ENCODE measurements at regions of chr10 and their contacts with region 1.

Region 1: DNA sequence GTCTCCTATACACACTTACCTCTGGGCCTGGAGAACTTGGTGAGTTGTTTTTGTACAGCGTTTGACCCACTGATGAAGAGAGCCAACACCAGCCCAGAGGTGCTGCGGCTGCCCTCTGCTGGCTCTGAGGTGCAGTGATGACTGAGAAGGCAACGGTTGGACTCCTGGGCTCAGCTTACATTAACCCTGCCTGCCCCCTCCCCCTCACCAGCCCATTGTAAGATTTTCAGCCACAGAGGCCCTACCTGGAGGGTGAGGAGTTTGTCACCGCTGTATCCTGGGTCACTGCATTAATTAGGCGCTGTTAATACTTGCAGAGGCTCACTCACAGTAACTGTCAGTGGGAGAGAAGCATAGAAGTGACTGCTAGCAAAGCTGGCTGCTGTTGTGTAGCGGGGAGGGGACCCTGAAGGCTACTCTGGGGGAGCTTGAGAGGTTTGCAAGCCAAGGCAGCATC is 19.0 kb upstream of the ANKRD2 start:
- DNase-seq: peak in 2 of 4 donors; percentile 69 to 88
- ATAC-seq: peak; percentile 95
- H3K4me3 ChIP-seq: no peak overlapping the region
- H3K27ac ChIP-seq: no peak overlapping the region
- H3K4me1 ChIP-seq: peaks cover 0 to 6% of the 10 kb centered on the region in 2 donors
- H3K27me3 ChIP-seq: no peaks in the 10 kb centered on the region
- CTCF ChIP-seq: peak; percentile 69 to 71

Region 2: DNA sequence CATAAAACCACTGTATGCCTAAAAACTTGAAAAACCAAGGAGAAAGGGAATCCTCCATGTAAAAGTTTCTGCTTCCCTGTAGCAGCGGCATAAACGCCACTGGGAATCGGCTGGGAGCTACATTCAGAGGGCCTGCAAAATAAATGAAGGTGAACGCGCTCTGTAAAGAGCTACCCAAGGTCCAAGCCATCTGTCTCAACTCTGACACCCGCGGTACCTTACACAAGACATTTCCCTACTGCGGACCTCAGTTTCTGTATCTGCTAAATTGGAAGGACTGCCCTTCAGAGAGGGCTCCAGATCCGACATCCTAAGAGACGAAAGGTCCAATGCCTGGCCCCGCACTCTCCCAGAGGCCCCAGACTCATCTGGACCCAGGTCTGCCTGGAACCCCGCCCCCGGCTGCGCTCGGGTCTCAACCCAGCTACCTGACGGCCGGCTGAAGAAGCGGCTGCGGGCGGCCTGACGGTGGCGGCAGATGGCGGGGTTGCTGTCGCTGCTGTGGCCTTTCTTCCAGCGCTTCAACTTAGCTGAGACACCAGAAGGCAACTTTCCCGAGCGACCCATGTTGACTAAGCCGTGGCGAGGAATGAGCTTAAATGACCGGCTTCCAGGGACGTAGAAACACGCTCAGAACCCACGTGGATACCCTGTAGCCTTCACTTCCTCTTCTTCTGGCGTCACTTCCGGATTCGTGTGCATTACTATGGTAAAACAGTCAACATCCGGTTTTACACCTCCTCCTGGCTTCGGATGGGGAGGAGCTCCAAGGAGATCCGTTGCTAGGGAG is 152.7 kb before region 1 on chr10 and contains the start of gene RRP12:
- intact Hi-C with region 1: no loop called
- DNase-seq: peak; percentile 85 to 98 (median 93)
- ATAC-seq: peak; percentile 96
- H3K4me3 ChIP-seq: peak within 1 kb of the TSS; percentile 72 to 86
- H3K27ac ChIP-seq: peak within 1 kb of the TSS; percentile 78 to 91
- H3K4me1 ChIP-seq: peaks cover 3 to 39% of the 10 kb centered on the region in 2 donors
- H3K27me3 ChIP-seq: no peaks in the 10 kb centered on the region
- CTCF ChIP-seq: no peak
- polyA plus RNA-seq, gene RRP12: 22.6 to 36.2 (median 24.8) TPM

Region 3: GRCh38 chr10:97463363-97464132 is 90.1 kb before region 1 on chr10:
- intact Hi-C with region 1: loop called in 1 of 2 experiments (anchors 5 kb)
- DNase-seq: peak in 3 of 4 donors; percentile 19 to 55 (median 52)
- ATAC-seq: peak; percentile 89
- H3K4me3 ChIP-seq: no peak overlapping the region
- H3K27ac ChIP-seq: peak overlapping the region; percentile 44 to 45
- H3K4me1 ChIP-seq: peaks cover 0 to 16% of the 10 kb centered on the region in 2 donors
- H3K27me3 ChIP-seq: no peaks in the 10 kb centered on the region
- CTCF ChIP-seq: peak; percentile 71 to 72

Region 4: GRCh38 chr10:97736902-97737769 is 183.5 kb after region 1 on chr10 and contains the start of gene ZFYVE27:
- intact Hi-C with region 1: no loop called
- DNase-seq: peak; percentile 93 to 99 (median 98)
- ATAC-seq: peak; percentile 95
- H3K4me3 ChIP-seq: peak within 1 kb of the TSS; percentile 94 to 97
- H3K27ac ChIP-seq: peak within 1 kb of the TSS; percentile 88 to 97
- H3K4me1 ChIP-seq: peaks cover 14 to 25% of the 10 kb centered on the region in 2 donors
- H3K27me3 ChIP-seq: no peaks in the 10 kb centered on the region
- CTCF ChIP-seq: no peak
- polyA plus RNA-seq, gene ZFYVE27: 26.8 to 35.5 (median 28.2) TPM